Activated T-helper 1 cell treated with anti-CD3 and anti-CD28 coated beads, Interleukin-12 subunit alpha, Interleukin-12 subunit beta, Interleukin-2, Interleukin-4 antibody, amounts not matched to agents 30 ng/mL and 10 ng/mL and 1 ng/mL, durations not matched to agents 14 hours and 24 hours and 36 hours (primary cell): ENCODE measurements at regions of chr13 and their contacts with region 1.

Region 1: GRCh38 chr13:33571618-33572017 is 246.3 kb upstream of the RFC3 start:
- DNase-seq: no peak
- H3K4me3 Mint-ChIP-seq: no peak overlapping the region
- H3K27ac Mint-ChIP-seq: no peak overlapping the region
- H3K4me1 Mint-ChIP-seq: peaks cover 6% of the 10 kb centered on the region
- H3K27me3 Mint-ChIP-seq: no peaks in the 10 kb centered on the region

Region 2: GRCh38 chr13:33355201-33355895 is 216.3 kb before region 1 on chr13:
- intact Hi-C with region 1: no loop called
- DNase-seq: no peak
- H3K4me3 Mint-ChIP-seq: no peak overlapping the region
- H3K27ac Mint-ChIP-seq: no peak overlapping the region
- H3K4me1 Mint-ChIP-seq: no peaks in the 10 kb centered on the region
- H3K27me3 Mint-ChIP-seq: peaks cover 35% of the 10 kb centered on the region

Region 3: GRCh38 chr13:33524086-33524485 is 47.5 kb before region 1 on chr13:
- intact Hi-C with region 1: no loop called
- DNase-seq: no peak
- H3K4me3 Mint-ChIP-seq: no peak overlapping the region
- H3K27ac Mint-ChIP-seq: no peak overlapping the region
- H3K4me1 Mint-ChIP-seq: peaks cover 5% of the 10 kb centered on the region
- H3K27me3 Mint-ChIP-seq: no peaks in the 10 kb centered on the region

Region 4: GRCh38 chr13:33560726-33561125 is 10.9 kb before region 1 on chr13:
- intact Hi-C with region 1: loop called (anchors 1 kb)
- DNase-seq: no peak
- H3K4me3 Mint-ChIP-seq: no peak overlapping the region
- H3K27ac Mint-ChIP-seq: no peak overlapping the region
- H3K4me1 Mint-ChIP-seq: peaks cover 8% of the 10 kb centered on the region
- H3K27me3 Mint-ChIP-seq: no peaks in the 10 kb centered on the region